GM12878 (cell line): ENCODE measurements at regions of chr12 and their contacts with region 1.

Region 1: DNA sequence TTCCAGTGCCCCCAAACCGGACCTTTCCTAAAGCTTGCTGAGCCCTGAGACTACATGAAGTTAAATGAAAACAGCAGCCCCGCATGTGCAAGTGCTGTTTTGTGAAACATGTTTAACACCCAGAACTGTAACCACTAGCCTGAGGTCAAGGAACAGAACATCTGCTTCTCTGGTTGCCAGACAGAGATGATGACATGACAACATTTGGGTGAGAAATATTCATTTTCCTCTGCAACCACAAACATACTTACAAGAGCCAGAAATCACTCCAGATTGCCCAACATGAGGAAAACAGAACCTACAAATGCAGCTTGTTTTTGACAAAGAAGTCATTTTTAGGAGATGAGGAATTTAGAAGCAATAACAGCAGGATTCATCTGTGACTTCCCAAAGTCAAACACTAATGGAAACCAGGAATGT is 110.4 kb downstream of the BCAT1 start:
- DNase-seq: peak; percentile 84
- ATAC-seq: peak; percentile 72
- H3K4me3 ChIP-seq: peak overlapping the region; percentile 8; the same call in 1 of the 2 replicates
- H3K27ac ChIP-seq: peak overlapping the region; percentile 89
- H3K4me1 ChIP-seq: peaks cover 27% of the 10 kb centered on the region
- H3K27me3 ChIP-seq: no peaks in the 10 kb centered on the region
- CTCF ChIP-seq: no peak
- EP300 ChIP-seq: peak; percentile 87 to 89; a peak in 3 of 4 replicates
- POLR2A ChIP-seq: no peak
- RAD21 ChIP-seq: 0 out of 2 replicates have a peak, but pooled peaks have one; percentile 3

Region 2: DNA sequence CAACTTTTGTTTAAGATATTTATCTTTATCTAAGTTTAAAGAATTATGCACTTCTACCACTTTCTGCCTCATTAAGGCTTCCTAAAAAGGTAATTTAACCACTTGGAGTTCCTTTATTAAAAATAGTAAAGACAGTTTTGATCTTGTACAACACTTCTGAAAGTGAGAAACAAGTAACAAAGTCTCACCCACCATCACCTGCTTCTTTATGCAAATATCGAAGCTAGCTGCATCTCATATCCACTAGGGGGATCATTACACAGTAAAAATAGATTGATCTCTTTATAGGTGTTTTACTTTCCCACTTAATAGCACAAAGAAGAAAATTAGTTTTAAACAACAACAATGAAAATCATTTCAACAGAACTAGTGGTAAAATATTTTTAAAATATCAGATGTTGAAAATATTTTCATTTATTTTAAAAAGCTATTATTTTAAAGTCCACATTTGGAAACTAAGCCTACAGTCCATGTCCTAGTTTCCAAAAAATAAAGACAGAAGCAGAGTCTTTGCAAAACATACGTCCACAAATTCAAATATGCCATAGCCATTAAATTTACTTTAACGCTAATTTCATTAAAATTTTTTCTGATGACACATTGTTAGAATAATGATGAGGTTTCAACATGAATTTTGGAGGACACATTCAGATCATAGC is 729.0 kb before region 1 on chr12:
- CTCF ChIA-PET with region 1: interaction called, 4 read pairs
- POLR2A ChIA-PET with region 1: no interaction called
- RAD21 ChIA-PET with region 1: interaction called, 4 read pairs
- SMC1A ChIA-PET with region 1: interaction called, 3 read pairs
- in situ Hi-C with region 1: no loop called
- intact Hi-C with region 1: loop called (anchors 5 kb)
- DNase-seq: peak; percentile 37
- ATAC-seq: peak; percentile 95
- H3K4me3 ChIP-seq: no peak overlapping the region
- H3K27ac ChIP-seq: no peak overlapping the region
- H3K4me1 ChIP-seq: no peaks in the 10 kb centered on the region
- H3K27me3 ChIP-seq: no peaks in the 10 kb centered on the region
- CTCF ChIP-seq: peak; percentile 47 to 70 (median 59)
- EP300 ChIP-seq: peak; percentile 34 to 51; a peak in 1 of 4 replicates
- POLR2A ChIP-seq: no peak
- RAD21 ChIP-seq: peak; percentile 71

Region 3: GRCh38 chr12:24360907-24361306 is 477.6 kb before region 1 on chr12:
- CTCF ChIA-PET with region 1: no interaction called
- POLR2A ChIA-PET with region 1: no interaction called
- RAD21 ChIA-PET with region 1: no interaction called
- SMC1A ChIA-PET with region 1: interaction called, 5 read pairs
- in situ Hi-C with region 1: no loop called
- intact Hi-C with region 1: loop called (anchors 10 kb)
- DNase-seq: peak; percentile 30
- ATAC-seq: peak; percentile 90
- H3K4me3 ChIP-seq: no peak overlapping the region
- H3K27ac ChIP-seq: no peak overlapping the region
- H3K4me1 ChIP-seq: peaks cover 7% of the 10 kb centered on the region; the same call in 1 of the 2 replicates
- H3K27me3 ChIP-seq: peaks cover 0 to 3% of the 10 kb centered on the region in 2 experiments; a peak in 2 of 4 replicates
- CTCF ChIP-seq: no peak
- EP300 ChIP-seq: peak in 1 of 2 experiments; percentile 10; a peak in 1 of 4 replicates
- POLR2A ChIP-seq: no peak
- RAD21 ChIP-seq: no peak

Region 4: GRCh38 chr12:24778486-24779304 is 59.8 kb before region 1 on chr12:
- CTCF ChIA-PET with region 1: interaction called, 5 read pairs
- POLR2A ChIA-PET with region 1: no interaction called
- RAD21 ChIA-PET with region 1: interaction called, 10 read pairs
- SMC1A ChIA-PET with region 1: interaction called, 14 read pairs
- in situ Hi-C with region 1: no loop called
- intact Hi-C with region 1: loop called (anchors 2 kb)
- DNase-seq: peak; percentile 8
- ATAC-seq: peak; percentile 90
- H3K4me3 ChIP-seq: no peak overlapping the region
- H3K27ac ChIP-seq: no peak overlapping the region
- H3K4me1 ChIP-seq: no peaks in the 10 kb centered on the region
- H3K27me3 ChIP-seq: no peaks in the 10 kb centered on the region
- CTCF ChIP-seq: peak; percentile 37 to 67 (median 43); a peak in 4 of 6 replicates
- EP300 ChIP-seq: no peak
- POLR2A ChIP-seq: no peak
- RAD21 ChIP-seq: peak; percentile 87

Region 5: GRCh38 chr12:24822121-24822899 is 16.2 kb before region 1 on chr12:
- CTCF ChIA-PET with region 1: interaction called, 8 read pairs
- POLR2A ChIA-PET with region 1: no interaction called
- RAD21 ChIA-PET with region 1: interaction called, 3 read pairs
- SMC1A ChIA-PET with region 1: interaction called, 18 read pairs
- in situ Hi-C with region 1: no loop called
- intact Hi-C with region 1: loop called (anchors 1 kb)
- DNase-seq: peak; percentile 66
- ATAC-seq: peak; percentile 85
- H3K4me3 ChIP-seq: peak overlapping the region; percentile 13; the same call in 1 of the 2 replicates
- H3K27ac ChIP-seq: peak overlapping the region; percentile 54
- H3K4me1 ChIP-seq: peaks cover 31% of the 10 kb centered on the region
- H3K27me3 ChIP-seq: no peaks in the 10 kb centered on the region
- CTCF ChIP-seq: no peak
- EP300 ChIP-seq: peak; percentile 76 to 84; a peak in 3 of 4 replicates
- POLR2A ChIP-seq: no peak
- RAD21 ChIP-seq: no peak

Region 6: DNA sequence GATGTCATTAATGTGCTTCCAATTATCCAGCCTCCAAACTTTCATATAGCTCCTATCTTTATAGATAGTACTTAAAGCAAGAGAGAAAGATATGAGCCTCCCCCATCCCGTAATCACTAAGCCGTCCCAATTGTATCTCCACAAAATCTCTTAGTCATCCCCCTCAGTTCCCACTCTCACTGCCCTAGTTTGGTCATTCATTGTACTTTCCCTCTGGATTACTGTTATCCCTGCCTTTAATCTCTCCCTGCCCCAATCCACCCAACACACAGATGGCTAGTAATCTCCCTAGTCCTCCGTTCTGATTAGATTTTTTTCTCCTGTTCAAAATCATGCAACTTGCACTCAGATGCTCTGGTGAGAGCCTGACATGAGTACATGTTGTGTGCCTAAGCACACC is 115.7 kb after region 1 on chr12:
- CTCF ChIA-PET with region 1: interaction called, 6 read pairs
- POLR2A ChIA-PET with region 1: interaction called, 11 read pairs
- RAD21 ChIA-PET with region 1: interaction called, 10 read pairs
- SMC1A ChIA-PET with region 1: interaction called, 61 read pairs
- in situ Hi-C with region 1: loop called (anchors 5 kb)
- intact Hi-C with region 1: loop called (anchors 1 kb)
- DNase-seq: no peak
- ATAC-seq: no peak
- H3K4me3 ChIP-seq: no peak overlapping the region
- H3K27ac ChIP-seq: peak overlapping the region; percentile 64
- H3K4me1 ChIP-seq: peaks cover 49% of the 10 kb centered on the region
- H3K27me3 ChIP-seq: no peaks in the 10 kb centered on the region
- CTCF ChIP-seq: no peak
- EP300 ChIP-seq: no peak
- POLR2A ChIP-seq: no peak
- RAD21 ChIP-seq: no peak

Region 7: DNA sequence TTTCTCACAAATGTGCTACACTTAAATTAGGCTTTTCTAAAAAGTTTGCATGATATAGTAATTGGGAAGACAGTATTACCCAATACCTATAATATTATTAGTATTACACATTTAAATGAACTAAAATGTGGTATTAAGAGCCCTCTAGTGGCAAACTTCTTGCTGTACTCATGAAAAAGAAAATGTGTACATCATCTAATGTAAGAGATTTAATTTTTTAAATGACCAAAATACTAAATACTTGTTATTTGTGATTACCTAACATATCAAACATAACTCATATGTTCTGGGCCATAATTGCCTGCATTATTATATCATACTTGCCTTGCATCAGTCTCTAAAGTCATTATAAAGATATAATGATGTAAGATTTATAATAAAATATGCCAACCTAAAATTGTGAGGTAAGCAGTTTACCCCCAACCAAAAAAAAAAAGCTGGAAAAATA is 292.2 kb after region 1 on chr12:
- CTCF ChIA-PET with region 1: interaction called, 4 read pairs
- POLR2A ChIA-PET with region 1: no interaction called
- RAD21 ChIA-PET with region 1: interaction called, 3 read pairs
- SMC1A ChIA-PET with region 1: interaction called, 4 read pairs
- in situ Hi-C with region 1: no loop called
- intact Hi-C with region 1: loop called (anchors 5 kb)
- DNase-seq: no peak
- ATAC-seq: peak; percentile 78
- H3K4me3 ChIP-seq: no peak overlapping the region
- H3K27ac ChIP-seq: no peak overlapping the region
- H3K4me1 ChIP-seq: peaks cover 2% of the 10 kb centered on the region; the same call in 1 of the 2 replicates
- H3K27me3 ChIP-seq: no peaks in the 10 kb centered on the region
- CTCF ChIP-seq: peak in 2 of 3 experiments; percentile 32 to 43; a peak in 3 of 6 replicates
- EP300 ChIP-seq: no peak
- POLR2A ChIP-seq: no peak
- RAD21 ChIP-seq: peak; percentile 65